Right ventricle myocardium inferior (tissue), 1 donor: ENCODE measurements at regions of chr18 and their contacts with region 1.

Region 1: DNA sequence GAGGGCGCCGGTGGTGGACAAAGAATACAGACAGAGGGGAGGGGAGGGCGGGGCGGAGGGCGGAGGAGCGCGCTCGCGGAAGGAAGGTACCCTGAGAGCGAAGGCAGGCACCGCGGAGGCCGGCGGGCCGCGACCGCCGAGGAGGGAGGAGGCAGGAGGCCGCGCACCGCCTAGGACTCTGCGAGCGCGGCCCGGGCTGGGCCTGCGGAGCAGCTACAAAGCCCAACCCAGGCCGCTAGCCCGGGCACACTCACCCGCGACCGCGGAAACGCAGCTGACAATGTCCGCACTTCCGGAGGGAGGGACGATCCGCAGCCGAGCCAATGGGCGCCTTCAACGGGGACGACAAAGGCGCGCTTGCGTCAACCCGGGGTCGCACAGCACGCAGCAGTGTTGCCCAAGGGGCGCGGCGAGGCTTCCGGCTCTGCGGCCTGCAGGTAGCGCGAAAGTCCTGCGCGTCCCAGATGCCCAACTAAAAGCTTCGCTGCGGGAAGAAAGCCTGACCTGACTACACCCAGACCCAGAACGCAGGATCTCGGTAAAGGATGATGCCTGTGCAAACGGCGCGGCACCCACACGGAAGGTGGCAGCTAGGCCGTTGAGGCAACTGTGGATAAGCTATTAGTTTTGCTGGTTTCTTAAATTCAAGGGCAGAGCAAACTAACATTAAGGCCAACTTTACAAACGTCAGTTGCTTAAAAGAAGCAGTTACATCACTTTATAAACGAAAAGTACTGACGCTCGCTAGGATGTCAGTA is at the start of gene C18orf32:
- DNase-seq: peak; percentile 98
- ATAC-seq: peak; percentile 99
- total RNA-seq, gene C18orf32: 45.3 TPM

Region 2: GRCh38 chr18:49813319-49814146 is 326.4 kb after region 1 on chr18 and contains the start of gene ACAA2:
- intact Hi-C with region 1: loop called (anchors 10 kb)
- DNase-seq: peak; percentile 94
- ATAC-seq: peak; percentile 95
- total RNA-seq, gene ACAA2: 441 TPM

Region 3: DNA sequence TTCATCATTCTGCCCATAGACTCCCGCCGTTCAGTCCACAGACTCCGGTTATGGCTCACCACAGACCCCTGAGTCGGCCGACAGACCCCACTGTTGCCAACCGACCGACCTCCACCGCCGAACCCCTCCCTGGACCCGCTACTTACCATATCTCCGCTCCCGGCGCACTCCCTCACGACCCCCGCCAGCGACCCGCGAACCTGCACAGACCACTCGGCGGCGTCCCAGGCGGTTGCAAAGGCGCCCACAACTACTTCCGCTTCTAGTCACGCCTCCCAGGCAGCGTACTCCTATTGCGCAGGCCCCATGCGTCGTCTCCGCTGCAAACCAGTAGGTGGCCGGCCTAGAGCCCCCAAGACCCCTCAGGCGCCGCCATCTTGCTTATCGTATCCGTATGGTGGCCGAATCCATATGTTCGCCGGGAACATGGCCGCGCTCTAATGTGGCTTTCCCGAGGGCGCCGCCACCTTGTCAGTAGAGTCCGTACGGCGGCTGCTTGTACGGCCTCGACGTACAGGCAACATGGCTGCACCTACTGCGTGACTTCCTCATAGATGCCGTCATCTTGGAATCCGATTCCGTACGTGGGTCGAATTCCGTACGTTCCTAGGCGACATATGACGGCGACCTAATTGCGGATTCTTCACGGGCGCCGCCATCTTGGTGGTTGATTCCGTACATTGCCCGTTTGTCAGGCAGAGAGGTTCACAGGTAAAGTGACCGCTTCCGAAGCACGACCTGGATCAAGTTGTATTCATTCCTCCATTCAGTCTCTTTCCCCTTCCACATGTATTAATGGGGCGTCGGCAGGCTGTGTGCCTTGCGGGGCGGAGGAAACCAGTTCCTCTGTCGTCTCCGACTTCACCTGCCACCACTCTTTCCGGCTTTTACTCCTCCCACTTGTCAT is 800.6 kb after region 1 on chr18 and contains the start of gene CXXC1:
- intact Hi-C with region 1: loop called (anchors 10 kb)
- DNase-seq: peak; percentile 99
- ATAC-seq: peak; percentile 95
- total RNA-seq, gene CXXC1: 32.8 TPM